ENCODE measurements at regions of chr11 and their contacts with region 1.

Region 1: GRCh38 chr11:36492724-36493304 is 17.3 kb downstream of the TRAF6 start:
- DNase-seq: no peak
- H3K4me3 ChIP-seq: no peak overlapping the region
- H3K27ac ChIP-seq: no peak overlapping the region
- H3K27me3 ChIP-seq: no peaks in the 10 kb centered on the region
- CTCF ChIP-seq: peak; percentile 79

Region 2: DNA sequence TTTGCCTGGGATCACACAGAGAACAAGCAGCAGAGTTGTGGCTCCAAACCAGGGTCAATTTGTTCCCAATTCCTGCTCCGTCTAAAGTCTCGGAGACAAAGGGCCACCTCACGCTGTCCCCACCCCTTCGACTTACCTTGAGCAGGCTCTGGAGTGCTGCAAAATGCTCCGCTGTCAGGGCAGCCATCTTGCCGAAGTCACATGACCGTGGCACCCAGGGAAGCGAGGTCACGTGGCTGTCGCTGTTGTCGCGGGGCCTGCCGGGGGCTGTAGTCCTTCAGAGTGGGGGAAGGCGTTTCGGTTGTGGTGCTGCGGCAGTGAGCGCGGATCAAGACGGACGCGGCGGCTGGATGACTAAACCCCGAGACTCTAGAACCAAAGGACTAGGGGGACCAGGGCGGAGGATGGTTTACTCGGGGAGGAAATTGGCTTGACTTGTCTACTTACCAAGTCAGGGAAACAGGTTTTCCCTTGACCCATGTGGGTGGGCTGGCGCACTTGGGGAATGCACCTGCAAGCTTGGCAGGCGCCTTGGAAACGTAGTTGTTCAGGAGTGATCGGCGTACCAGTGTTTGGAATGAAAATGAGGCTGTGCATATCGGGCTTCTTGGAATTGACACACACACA is 203.5 kb before region 1 on chr11 and contains the start of gene COMMD9:
- CTCF ChIA-PET with region 1: interaction called, 121 read pairs
- POLR2A ChIA-PET with region 1: interaction called, 3 read pairs
- DNase-seq: peak; percentile 79
- H3K4me3 ChIP-seq: peak within 1 kb of the TSS; percentile 98
- H3K27ac ChIP-seq: no peak within 1 kb of the TSS
- H3K27me3 ChIP-seq: no peaks in the 10 kb centered on the region
- CTCF ChIP-seq: no peak
- polyA plus RNA-seq, gene COMMD9: 51.5 and 73.0 TPM in 2 replicates

Region 3: GRCh38 chr11:36300651-36301050 is 192.2 kb before region 1 on chr11:
- CTCF ChIA-PET with region 1: interaction called, 121 read pairs
- POLR2A ChIA-PET with region 1: no interaction called
- DNase-seq: no peak
- H3K4me3 ChIP-seq: no peak overlapping the region
- H3K27ac ChIP-seq: no peak overlapping the region
- H3K27me3 ChIP-seq: no peaks in the 10 kb centered on the region
- CTCF ChIP-seq: no peak

Region 4: GRCh38 chr11:36306888-36307287 is 185.9 kb before region 1 on chr11:
- CTCF ChIA-PET with region 1: interaction called, 16 read pairs
- POLR2A ChIA-PET with region 1: no interaction called
- DNase-seq: no peak
- H3K4me3 ChIP-seq: no peak overlapping the region
- H3K27ac ChIP-seq: no peak overlapping the region
- H3K27me3 ChIP-seq: peaks cover 2% of the 10 kb centered on the region
- CTCF ChIP-seq: peak; percentile 74

Region 5: GRCh38 chr11:36376888-36377758 is 115.7 kb before region 1 on chr11:
- CTCF ChIA-PET with region 1: interaction called, 11 read pairs
- POLR2A ChIA-PET with region 1: no interaction called
- DNase-seq: no peak
- H3K4me3 ChIP-seq: peak overlapping the region; percentile 70
- H3K27ac ChIP-seq: no peak overlapping the region
- H3K27me3 ChIP-seq: no peaks in the 10 kb centered on the region
- CTCF ChIP-seq: peak; percentile 73

Region 6: GRCh38 chr11:36509694-36510566 is 17.1 kb after region 1 on chr11 and contains the start of gene TRAF6:
- CTCF ChIA-PET with region 1: interaction called, 89 read pairs
- POLR2A ChIA-PET with region 1: no interaction called
- DNase-seq: peak; percentile 43
- H3K4me3 ChIP-seq: peak within 1 kb of the TSS; percentile 95
- H3K27ac ChIP-seq: peak within 1 kb of the TSS; percentile 63
- H3K27me3 ChIP-seq: peaks cover 2% of the 10 kb centered on the region
- CTCF ChIP-seq: peak; percentile 80
- polyA plus RNA-seq, gene TRAF6: 9.1 and 10.0 TPM in 2 replicates

Measured in AG04450 (cell line).